GM10248 (cell line): ENCODE measurements at regions of chr3 and their contacts with region 1.

Region 1: GRCh38 chr3:67263866-67264265 is 265.8 kb downstream of the KBTBD8 start:
- DNase-seq: no peak
- CTCF ChIP-seq: no peak

Region 2: DNA sequence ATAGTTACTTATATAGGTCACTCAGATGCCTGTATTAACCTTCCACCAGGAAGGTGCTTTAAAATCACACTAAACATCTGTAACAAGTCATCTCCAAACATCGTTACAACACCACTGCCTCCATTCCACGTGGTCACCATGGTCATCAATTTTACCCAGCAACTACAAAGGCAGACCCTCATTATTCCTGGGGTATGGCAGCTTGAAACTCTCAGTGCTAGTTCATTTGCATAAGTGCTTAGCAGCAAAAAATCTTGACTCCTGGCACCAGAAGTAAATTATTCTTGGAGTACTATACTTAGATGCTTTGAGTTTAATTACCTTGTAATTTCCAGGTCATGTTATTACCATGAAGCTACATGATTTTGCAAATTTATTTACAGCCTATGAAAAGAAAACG is 15.1 kb before region 1 on chr3:
- CTCF ChIA-PET with region 1: interaction called, 10 read pairs
- POLR2A ChIA-PET with region 1: no interaction called
- DNase-seq: no peak
- CTCF ChIP-seq: no peak

Region 3: DNA sequence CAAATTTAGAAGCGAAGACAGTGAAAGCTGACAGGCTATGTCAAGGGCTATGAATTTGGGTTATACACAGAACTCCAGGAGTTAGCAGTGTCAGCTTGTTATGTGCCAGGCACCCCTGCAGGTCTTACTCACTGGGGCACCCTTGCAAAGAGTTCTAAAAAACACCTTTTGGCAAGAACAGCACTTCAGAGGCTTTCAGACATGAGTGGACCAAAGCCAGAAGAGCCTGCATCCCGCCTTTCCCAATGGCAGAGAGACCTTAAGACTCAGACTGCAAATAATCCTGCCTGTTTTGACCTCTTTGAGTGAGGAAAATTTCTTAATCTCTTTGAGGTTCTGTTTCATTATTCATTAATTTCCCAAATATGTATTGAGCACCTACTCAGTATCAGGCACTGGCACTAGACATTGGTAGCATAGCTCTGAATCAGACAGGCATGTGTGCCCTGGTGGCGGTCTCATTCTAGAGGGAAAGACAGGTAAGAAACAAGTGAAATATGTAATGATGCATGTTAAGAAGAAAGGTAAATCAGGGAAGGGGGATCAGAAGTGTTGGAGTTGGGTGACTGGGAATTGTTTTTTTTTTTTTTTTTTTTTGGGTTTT is 14.3 kb after region 1 on chr3:
- CTCF ChIA-PET with region 1: interaction called, 14 read pairs
- POLR2A ChIA-PET with region 1: no interaction called
- DNase-seq: no peak
- CTCF ChIP-seq: no peak